ENCODE measurements at regions of chr19 and their contacts with region 1.

Region 1: GRCh38 chr19:29811125-29812079 is at the start of gene CCNE1:
- DNase-seq: peak; percentile 91
- H3K4me3 ChIP-seq: peak within 1 kb of the TSS; percentile 49
- H3K27ac ChIP-seq: peak within 1 kb of the TSS; percentile 18
- H3K4me1 ChIP-seq: no peaks in the 10 kb centered on the region
- H3K27me3 ChIP-seq: no peaks in the 10 kb centered on the region
- CTCF ChIP-seq: no peak
- total RNA-seq, gene CCNE1: 8.9 and 12.0 TPM in 2 replicates

Region 2: GRCh38 chr19:29623726-29624488 is 187.5 kb before region 1 on chr19:
- CTCF ChIA-PET with region 1: no interaction called
- POLR2A ChIA-PET with region 1: no interaction called
- intact Hi-C with region 1: no loop called
- DNase-seq: no peak
- H3K4me3 ChIP-seq: no peak overlapping the region
- H3K27ac ChIP-seq: no peak overlapping the region
- H3K4me1 ChIP-seq: no peaks in the 10 kb centered on the region
- H3K27me3 ChIP-seq: peaks cover 15% of the 10 kb centered on the region
- CTCF ChIP-seq: no peak

Region 3: GRCh38 chr19:29831041-29831548 is 19.7 kb after region 1 on chr19:
- CTCF ChIA-PET with region 1: no interaction called
- POLR2A ChIA-PET with region 1: interaction called, 17 read pairs
- intact Hi-C with region 1: no loop called
- DNase-seq: no peak
- H3K4me3 ChIP-seq: no peak overlapping the region
- H3K27ac ChIP-seq: no peak overlapping the region
- H3K4me1 ChIP-seq: no peaks in the 10 kb centered on the region
- H3K27me3 ChIP-seq: peaks cover 7% of the 10 kb centered on the region
- CTCF ChIP-seq: no peak

Region 4: GRCh38 chr19:29844891-29845572 is 33.6 kb after region 1 on chr19:
- CTCF ChIA-PET with region 1: no interaction called
- POLR2A ChIA-PET with region 1: no interaction called
- intact Hi-C with region 1: loop called (anchors 1 kb)
- DNase-seq: peak; percentile 93
- H3K4me3 ChIP-seq: peak overlapping the region; percentile 48
- H3K27ac ChIP-seq: no peak overlapping the region
- H3K4me1 ChIP-seq: peaks cover 5% of the 10 kb centered on the region
- H3K27me3 ChIP-seq: peaks cover 47% of the 10 kb centered on the region
- CTCF ChIP-seq: no peak

Measured in A673 (cell line).